Activated CD4-positive, alpha-beta T cell treated with anti-CD3 and anti-CD28 coated beads for 36 hours (primary cell): ENCODE measurements at regions of chrX and their contacts with region 1.

Region 1: DNA sequence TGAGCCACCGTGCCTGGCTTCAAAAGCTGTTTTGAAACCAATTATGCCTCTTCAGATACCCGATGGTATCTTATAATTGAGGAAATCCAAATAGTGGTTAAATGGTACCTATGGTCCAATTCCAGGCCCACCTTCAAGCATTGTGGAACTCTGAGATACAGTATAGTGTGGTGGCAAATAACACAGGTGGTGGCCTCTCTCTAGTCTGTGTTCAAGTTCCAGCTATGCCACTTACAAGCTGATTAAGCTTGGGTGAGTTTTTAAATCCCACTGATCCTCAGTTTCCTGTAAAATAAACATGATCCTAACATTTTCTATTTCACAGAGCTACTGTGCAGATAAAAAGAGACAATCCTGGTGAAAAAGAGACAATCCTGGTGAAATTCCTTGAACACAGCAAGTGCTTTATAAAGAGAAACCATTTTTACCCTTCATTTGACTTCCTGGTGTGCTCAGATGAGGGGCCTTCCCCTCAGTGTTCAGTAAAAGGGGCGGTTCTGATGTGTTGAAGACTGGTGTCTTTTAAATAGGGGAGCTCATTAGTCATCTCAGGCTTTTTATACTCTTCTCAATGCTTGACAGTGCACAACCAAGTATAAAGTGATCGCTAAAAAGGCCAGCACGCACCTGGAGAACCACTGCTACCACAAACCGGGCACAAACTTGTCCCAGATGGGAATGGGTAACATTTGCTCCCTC is 30.8 kb upstream of the CD40LG start:
- DNase-seq: peak; percentile 53
- ATAC-seq: peak; percentile 82
- H3K4me3 Mint-ChIP-seq: peak overlapping the region; percentile 44
- H3K27ac Mint-ChIP-seq: peak overlapping the region; percentile 87
- H3K4me1 Mint-ChIP-seq: peaks cover 79% of the 10 kb centered on the region
- H3K27me3 Mint-ChIP-seq: no peaks in the 10 kb centered on the region

Region 2: GRCh38 chrX:136488706-136489105 is 128.4 kb before region 1 on chrX:
- CTCF ChIA-PET with region 1: no interaction called
- POLR2A ChIA-PET with region 1: no interaction called
- intact Hi-C with region 1: no loop called
- DNase-seq: no peak
- ATAC-seq: no peak
- H3K4me3 Mint-ChIP-seq: no peak overlapping the region
- H3K27ac Mint-ChIP-seq: no peak overlapping the region
- H3K4me1 Mint-ChIP-seq: no peaks in the 10 kb centered on the region
- H3K27me3 Mint-ChIP-seq: peaks cover 26% of the 10 kb centered on the region

Region 3: GRCh38 chrX:136646602-136647239 is 29.6 kb after region 1 on chrX:
- CTCF ChIA-PET with region 1: interaction called, 9 read pairs
- POLR2A ChIA-PET with region 1: interaction called, 6 read pairs
- intact Hi-C with region 1: loop called (anchors 1 kb)
- DNase-seq: peak; percentile 84
- ATAC-seq: peak; percentile 60
- H3K4me3 Mint-ChIP-seq: peak overlapping the region; percentile 96
- H3K27ac Mint-ChIP-seq: peak overlapping the region; percentile 100
- H3K4me1 Mint-ChIP-seq: peaks cover 57% of the 10 kb centered on the region
- H3K27me3 Mint-ChIP-seq: no peaks in the 10 kb centered on the region